GM12878 (cell line): ENCODE measurements at regions of chrX and their contacts with region 1.

Region 1: GRCh38 chrX:154918060-154918483 is 31.9 kb downstream of the F8A1 start:
- DNase-seq: peak; percentile 16
- ATAC-seq: peak; percentile 91
- H3K4me3 ChIP-seq: no peak overlapping the region
- H3K27ac ChIP-seq: no peak overlapping the region
- H3K4me1 ChIP-seq: no peaks in the 10 kb centered on the region
- H3K27me3 ChIP-seq: no peaks in the 10 kb centered on the region
- CTCF ChIP-seq: peak; percentile 67 to 75 (median 69)
- EP300 ChIP-seq: no peak
- POLR2A ChIP-seq: no peak
- RAD21 ChIP-seq: peak; percentile 84

Region 2: DNA sequence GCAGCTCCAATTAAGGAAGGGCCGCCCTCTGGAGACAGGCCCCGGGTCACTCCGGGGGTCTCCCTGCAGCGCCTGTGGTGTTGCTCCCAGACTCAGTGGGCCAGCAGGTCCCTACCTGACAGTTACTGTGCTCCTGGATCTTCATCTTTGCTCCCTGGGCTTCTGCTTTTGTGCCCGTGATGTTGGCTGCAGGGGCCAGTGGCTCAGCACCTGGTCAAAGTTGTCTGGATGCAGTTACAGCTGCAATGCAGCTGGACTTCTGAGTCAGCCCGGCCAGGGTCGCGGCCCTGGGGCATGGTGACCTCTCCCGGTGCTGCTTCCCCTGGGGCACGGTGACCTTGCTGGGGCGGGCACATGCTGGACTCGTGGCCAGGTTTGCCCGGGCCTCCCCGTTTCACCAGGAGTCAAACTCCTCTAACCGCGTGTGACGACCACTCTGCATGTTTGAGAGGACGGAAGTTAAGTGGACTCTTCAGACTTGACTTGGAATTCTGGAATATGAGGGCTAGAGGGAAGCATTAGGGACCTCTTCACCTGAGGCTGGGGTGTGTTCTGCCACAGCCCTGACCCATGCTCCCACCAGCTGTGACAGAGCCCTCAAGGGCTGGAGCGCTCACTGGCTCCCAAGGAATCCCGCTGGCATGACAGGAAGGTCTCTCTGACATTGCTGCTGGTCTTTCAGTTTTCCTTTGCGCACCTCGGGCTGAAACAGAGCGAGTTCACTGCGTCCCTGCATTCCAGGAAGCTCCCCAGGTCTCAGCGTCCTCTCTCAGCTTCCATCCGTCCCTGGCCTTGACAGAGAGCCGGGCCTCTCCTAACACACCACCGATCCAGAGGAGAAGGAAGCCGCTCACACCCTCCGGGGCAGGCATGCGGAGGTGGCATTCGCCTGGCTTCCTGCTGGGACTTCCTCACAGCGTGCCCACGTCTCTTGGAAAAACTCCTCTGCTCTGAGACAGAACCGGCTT is 268.3 kb before region 1 on chrX:
- CTCF ChIA-PET with region 1: no interaction called
- POLR2A ChIA-PET with region 1: no interaction called
- RAD21 ChIA-PET with region 1: no interaction called
- SMC1A ChIA-PET with region 1: no interaction called
- in situ Hi-C with region 1: no loop called
- intact Hi-C with region 1: no loop called
- DNase-seq: no peak
- ATAC-seq: no peak
- H3K4me3 ChIP-seq: no peak overlapping the region
- H3K27ac ChIP-seq: no peak overlapping the region
- H3K4me1 ChIP-seq: no peaks in the 10 kb centered on the region
- H3K27me3 ChIP-seq: no peaks in the 10 kb centered on the region
- CTCF ChIP-seq: no peak
- EP300 ChIP-seq: no peak
- POLR2A ChIP-seq: no peak
- RAD21 ChIP-seq: no peak

Region 3: DNA sequence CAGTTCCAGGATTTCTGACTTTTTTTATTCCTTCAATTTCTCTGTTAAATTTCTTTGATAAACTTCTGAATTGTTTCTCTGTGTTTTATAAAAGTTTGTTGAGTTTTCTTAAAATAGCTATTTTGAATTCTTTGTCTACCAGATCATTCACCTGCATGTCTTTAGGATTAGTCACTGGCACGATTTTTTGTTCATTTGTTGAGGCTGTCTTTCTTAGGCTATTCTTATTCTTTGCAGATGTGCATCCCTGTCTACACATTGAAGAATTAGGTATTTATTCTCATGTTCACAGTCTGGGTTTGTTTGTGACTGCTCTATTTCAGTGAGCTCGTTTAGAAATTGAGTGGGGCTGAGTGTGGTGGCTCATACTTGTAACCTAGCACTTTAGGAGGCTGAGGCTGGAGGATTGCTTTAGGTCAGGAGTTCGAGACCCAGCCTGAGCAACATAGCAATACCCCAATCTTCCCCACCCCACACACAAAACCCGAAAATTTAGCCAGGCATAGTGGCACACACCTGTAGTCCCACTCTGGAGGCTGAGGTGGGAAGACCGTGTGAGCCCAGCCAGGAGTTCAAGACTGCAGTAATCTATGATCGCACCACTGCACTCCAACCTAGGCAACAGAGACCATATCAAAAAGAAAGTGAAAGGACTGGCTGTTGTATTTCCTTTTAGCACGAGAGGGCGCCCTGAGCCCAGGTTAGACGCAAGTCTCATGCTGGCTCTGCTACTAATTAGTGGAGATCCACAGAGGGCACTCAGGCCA is 62.4 kb after region 1 on chrX:
- CTCF ChIA-PET with region 1: interaction called, 20 read pairs
- POLR2A ChIA-PET with region 1: no interaction called
- RAD21 ChIA-PET with region 1: interaction called, 10 read pairs
- SMC1A ChIA-PET with region 1: interaction called, 9 read pairs
- in situ Hi-C with region 1: no loop called
- intact Hi-C with region 1: loop called (anchors 5 kb)
- DNase-seq: peak; percentile 68
- ATAC-seq: peak; percentile 97
- H3K4me3 ChIP-seq: peak overlapping the region; percentile 49; the same call in 1 of the 2 replicates
- H3K27ac ChIP-seq: no peak overlapping the region
- H3K4me1 ChIP-seq: peaks cover 4% of the 10 kb centered on the region; the same call in 1 of the 2 replicates
- H3K27me3 ChIP-seq: no peaks in the 10 kb centered on the region
- CTCF ChIP-seq: peak; percentile 57 to 92 (median 77); a peak in 5 of 6 replicates
- EP300 ChIP-seq: no peak
- POLR2A ChIP-seq: no peak
- RAD21 ChIP-seq: peak; percentile 85

Region 4: DNA sequence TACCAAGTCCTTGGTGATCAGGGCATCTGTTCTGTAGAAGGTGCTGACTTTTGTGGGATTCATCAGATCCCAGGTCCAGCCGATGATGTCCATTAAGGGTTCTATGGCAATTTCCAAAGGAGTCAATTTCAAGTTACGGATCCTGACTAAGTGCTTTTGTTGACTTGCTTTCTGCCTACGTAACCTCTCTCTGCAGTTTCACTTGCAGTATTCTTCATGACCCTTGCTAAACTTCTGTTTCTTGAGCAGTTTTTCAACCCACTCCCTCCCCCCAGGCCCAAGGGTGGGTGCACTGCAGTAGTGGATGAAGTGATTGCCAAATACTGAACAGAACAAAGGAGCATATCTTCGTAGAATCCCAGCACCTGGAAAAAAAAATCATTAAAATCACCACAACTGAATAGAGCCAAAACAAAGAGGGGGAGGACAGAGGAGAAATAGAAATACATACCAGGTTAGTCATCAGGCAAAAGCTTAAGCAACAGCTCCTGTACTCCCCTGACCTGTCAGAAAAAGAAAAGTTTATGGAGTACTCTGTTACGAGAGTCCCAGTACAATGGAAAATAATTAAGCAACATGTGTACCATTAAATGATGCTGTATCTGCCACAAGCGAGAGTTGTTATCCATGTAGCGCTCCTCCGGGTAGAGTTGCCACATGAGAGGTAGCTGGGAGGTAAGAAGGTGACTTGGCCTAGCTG is 147.1 kb after region 1 on chrX:
- CTCF ChIA-PET with region 1: interaction called, 10 read pairs
- POLR2A ChIA-PET with region 1: no interaction called
- RAD21 ChIA-PET with region 1: no interaction called
- SMC1A ChIA-PET with region 1: interaction called, 5 read pairs
- in situ Hi-C with region 1: no loop called
- intact Hi-C with region 1: no loop called
- DNase-seq: no peak
- ATAC-seq: no peak
- H3K4me3 ChIP-seq: no peak overlapping the region
- H3K27ac ChIP-seq: no peak overlapping the region
- H3K4me1 ChIP-seq: no peaks in the 10 kb centered on the region
- H3K27me3 ChIP-seq: no peaks in the 10 kb centered on the region
- CTCF ChIP-seq: no peak
- EP300 ChIP-seq: no peak
- POLR2A ChIP-seq: no peak
- RAD21 ChIP-seq: no peak

Region 5: DNA sequence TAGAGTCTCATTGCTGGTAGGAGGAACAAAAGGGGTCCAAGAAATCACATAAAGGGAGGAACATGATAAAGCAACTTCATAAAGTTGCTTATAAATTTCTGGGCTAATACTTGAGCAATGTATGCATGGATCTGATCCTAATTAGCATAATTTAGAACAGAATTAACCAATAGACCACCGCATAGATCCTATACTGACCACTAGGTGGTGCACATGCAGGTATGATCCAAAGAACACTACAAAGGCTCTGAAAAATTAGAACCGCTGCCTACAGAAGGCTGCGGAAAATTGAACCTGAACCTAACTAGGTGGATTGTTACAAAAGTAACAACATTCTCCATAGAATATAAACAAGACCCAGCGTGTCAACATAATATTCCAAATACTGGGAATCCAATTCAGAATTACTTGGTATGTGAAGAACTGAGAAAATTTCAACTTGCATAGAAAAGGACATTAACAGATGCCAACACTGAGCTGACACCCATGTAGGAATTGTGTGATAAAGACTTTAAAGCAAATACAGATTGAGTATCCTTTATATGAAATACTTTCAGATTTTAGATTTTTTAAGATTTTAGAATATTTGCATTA is 176.5 kb after region 1 on chrX:
- CTCF ChIA-PET with region 1: interaction called, 12 read pairs
- POLR2A ChIA-PET with region 1: no interaction called
- RAD21 ChIA-PET with region 1: interaction called, 4 read pairs
- SMC1A ChIA-PET with region 1: interaction called, 4 read pairs
- in situ Hi-C with region 1: no loop called
- intact Hi-C with region 1: loop called (anchors 10 kb)
- DNase-seq: no peak
- ATAC-seq: peak; percentile 82
- H3K4me3 ChIP-seq: no peak overlapping the region
- H3K27ac ChIP-seq: no peak overlapping the region
- H3K4me1 ChIP-seq: no peaks in the 10 kb centered on the region
- H3K27me3 ChIP-seq: no peaks in the 10 kb centered on the region
- CTCF ChIP-seq: peak; percentile 42 to 63 (median 54)
- EP300 ChIP-seq: no peak
- POLR2A ChIP-seq: no peak
- RAD21 ChIP-seq: peak; percentile 54

Region 6: GRCh38 chrX:155148724-155149537 is 230.9 kb after region 1 on chrX:
- CTCF ChIA-PET with region 1: interaction called, 25 read pairs
- POLR2A ChIA-PET with region 1: no interaction called
- RAD21 ChIA-PET with region 1: interaction called, 9 read pairs
- SMC1A ChIA-PET with region 1: interaction called, 15 read pairs
- in situ Hi-C with region 1: loop called (anchors 10 kb)
- intact Hi-C with region 1: loop called (anchors 2 kb)
- DNase-seq: no peak
- ATAC-seq: peak; percentile 72
- H3K4me3 ChIP-seq: no peak overlapping the region
- H3K27ac ChIP-seq: no peak overlapping the region
- H3K4me1 ChIP-seq: no peaks in the 10 kb centered on the region
- H3K27me3 ChIP-seq: no peaks in the 10 kb centered on the region
- CTCF ChIP-seq: peak; percentile 39 to 54 (median 52); a peak in 5 of 6 replicates
- EP300 ChIP-seq: no peak
- POLR2A ChIP-seq: no peak
- RAD21 ChIP-seq: peak; percentile 41; the same call in 1 of the 2 replicates